ENCODE measurements at regions of chr18 and their contacts with region 1.

Region 1: GRCh38 chr18:63025251-63026090 is 294.1 kb downstream of the BCL2 start:
- DNase-seq: peak; percentile 56
- H3K4me3 Mint-ChIP-seq: no peak overlapping the region
- H3K27ac Mint-ChIP-seq: no peak overlapping the region
- H3K4me1 Mint-ChIP-seq: no peaks in the 10 kb centered on the region
- H3K27me3 Mint-ChIP-seq: peaks cover 13% of the 10 kb centered on the region
- CTCF ChIP-seq: peak; percentile 41

Region 2: DNA sequence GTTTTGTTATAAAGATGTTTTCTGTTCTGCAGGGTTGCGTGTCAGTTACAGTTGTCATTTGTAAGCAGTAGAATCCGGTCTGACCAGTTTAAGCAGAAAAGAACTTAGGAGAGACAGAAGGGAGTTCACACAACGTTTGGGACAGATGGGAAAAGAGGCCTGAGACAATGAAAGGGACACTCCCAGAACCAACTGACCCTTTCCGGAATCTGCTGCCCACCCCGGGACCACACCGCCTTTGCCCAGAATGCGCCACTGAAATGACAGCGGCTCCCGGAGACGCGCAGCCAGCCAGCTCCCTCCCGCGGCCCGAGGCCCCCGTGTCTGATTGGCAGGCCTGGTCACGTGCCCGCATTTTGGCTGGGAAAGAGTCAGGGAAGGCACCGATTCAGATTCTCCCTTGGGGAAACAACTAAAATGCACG is 49.5 kb after region 1 on chr18:
- CTCF ChIA-PET with region 1: interaction called, 4 read pairs
- POLR2A ChIA-PET with region 1: interaction called, 3 read pairs
- intact Hi-C with region 1: loop called (anchors 5 kb)
- DNase-seq: no peak
- H3K4me3 Mint-ChIP-seq: peak overlapping the region; percentile 72
- H3K27ac Mint-ChIP-seq: no peak overlapping the region
- H3K4me1 Mint-ChIP-seq: peaks cover 12% of the 10 kb centered on the region
- H3K27me3 Mint-ChIP-seq: no peaks in the 10 kb centered on the region
- CTCF ChIP-seq: no peak

Region 3: DNA sequence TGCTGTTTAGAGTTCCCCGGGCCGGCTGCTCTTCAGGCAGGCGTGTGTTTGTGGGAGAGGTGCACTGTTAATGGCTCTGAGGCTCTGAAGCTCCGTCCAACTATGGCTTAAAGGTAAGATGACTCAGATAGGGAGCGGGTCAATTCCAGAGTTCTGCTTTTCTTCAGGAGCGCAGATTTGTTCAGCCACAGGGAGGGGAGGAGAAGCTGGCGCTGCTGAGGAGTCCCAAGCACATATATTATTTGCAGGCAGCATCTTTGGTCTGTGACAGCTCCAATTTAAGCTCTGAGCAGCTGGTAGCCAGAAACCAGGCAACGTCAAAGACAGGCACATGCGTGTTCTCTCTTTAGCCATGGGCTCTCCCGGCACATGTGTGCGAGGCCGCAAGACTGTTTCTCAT is 64.9 kb after region 1 on chr18:
- CTCF ChIA-PET with region 1: no interaction called
- POLR2A ChIA-PET with region 1: no interaction called
- intact Hi-C with region 1: no loop called
- DNase-seq: no peak
- H3K4me3 Mint-ChIP-seq: no peak overlapping the region
- H3K27ac Mint-ChIP-seq: no peak overlapping the region
- H3K4me1 Mint-ChIP-seq: no peaks in the 10 kb centered on the region
- H3K27me3 Mint-ChIP-seq: peaks cover 13% of the 10 kb centered on the region
- CTCF ChIP-seq: no peak

Region 4: GRCh38 chr18:63320046-63320689 is 294.7 kb after region 1 on chr18:
- CTCF ChIA-PET with region 1: interaction called, 18 read pairs
- POLR2A ChIA-PET with region 1: interaction called, 5 read pairs
- intact Hi-C with region 1: loop called (anchors 2 kb)
- DNase-seq: peak; percentile 83
- H3K4me3 Mint-ChIP-seq: peak overlapping the region; percentile 96
- H3K27ac Mint-ChIP-seq: no peak overlapping the region
- H3K4me1 Mint-ChIP-seq: peaks cover 23% of the 10 kb centered on the region
- H3K27me3 Mint-ChIP-seq: no peaks in the 10 kb centered on the region
- CTCF ChIP-seq: no peak